Activated naive CD4-positive, alpha-beta T cell treated with anti-CD3 and anti-CD28 coated beads for 36 hours (primary cell): ENCODE measurements at regions of chr1 and their contacts with region 1.

Region 1: GRCh38 chr1:236281654-236282424 is at the start of gene ERO1B:
- DNase-seq: peak; percentile 95
- H3K4me3 Mint-ChIP-seq: peak within 1 kb of the TSS; percentile 91
- H3K27ac Mint-ChIP-seq: peak within 1 kb of the TSS; percentile 66
- H3K4me1 Mint-ChIP-seq: peaks cover 41% of the 10 kb centered on the region
- H3K27me3 Mint-ChIP-seq: no peaks in the 10 kb centered on the region
- total RNA-seq, gene ERO1B: 1.6 to 2.5 TPM

Region 2: GRCh38 chr1:235504496-235505222 is 777.2 kb before region 1 on chr1:
- CTCF ChIA-PET with region 1: no interaction called
- intact Hi-C with region 1: loop called (anchors 2 kb)
- DNase-seq: peak; percentile 99
- H3K4me3 Mint-ChIP-seq: peak overlapping the region; percentile 97
- H3K27ac Mint-ChIP-seq: peak overlapping the region; percentile 97
- H3K4me1 Mint-ChIP-seq: peaks cover 31% of the 10 kb centered on the region
- H3K27me3 Mint-ChIP-seq: no peaks in the 10 kb centered on the region

Region 3: DNA sequence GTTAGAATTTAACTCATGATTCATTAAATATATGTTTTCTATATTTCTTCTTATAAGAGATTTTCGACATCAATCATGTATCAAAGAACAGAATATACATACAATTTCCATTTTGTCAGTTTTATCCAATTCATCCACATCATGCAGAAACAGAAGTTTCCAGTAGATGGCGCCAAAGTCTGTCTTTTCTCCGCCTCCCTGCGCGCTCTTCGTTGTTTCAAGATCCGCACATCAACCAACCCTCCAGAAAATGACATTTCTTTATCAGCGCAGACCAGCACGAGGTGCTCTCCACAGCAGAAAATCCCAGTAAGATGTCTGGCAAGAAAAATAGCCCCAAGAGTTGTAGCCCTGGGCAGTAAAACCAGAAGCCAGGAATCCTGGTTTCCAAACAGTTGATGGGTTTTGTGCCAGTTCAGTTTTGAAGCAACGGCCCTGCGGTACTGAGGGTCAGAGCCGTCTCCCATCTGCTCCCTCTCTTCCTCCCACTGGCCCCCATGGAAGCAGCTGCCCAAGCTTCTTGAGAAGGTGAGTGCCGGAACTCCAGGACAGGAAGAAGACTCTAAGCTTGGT is 178.1 kb before region 1 on chr1:
- CTCF ChIA-PET with region 1: no interaction called
- intact Hi-C with region 1: loop called (anchors 5 kb)
- DNase-seq: peak; percentile 80
- H3K4me3 Mint-ChIP-seq: no peak overlapping the region
- H3K27ac Mint-ChIP-seq: no peak overlapping the region
- H3K4me1 Mint-ChIP-seq: peaks cover 2% of the 10 kb centered on the region
- H3K27me3 Mint-ChIP-seq: no peaks in the 10 kb centered on the region

Region 4: DNA sequence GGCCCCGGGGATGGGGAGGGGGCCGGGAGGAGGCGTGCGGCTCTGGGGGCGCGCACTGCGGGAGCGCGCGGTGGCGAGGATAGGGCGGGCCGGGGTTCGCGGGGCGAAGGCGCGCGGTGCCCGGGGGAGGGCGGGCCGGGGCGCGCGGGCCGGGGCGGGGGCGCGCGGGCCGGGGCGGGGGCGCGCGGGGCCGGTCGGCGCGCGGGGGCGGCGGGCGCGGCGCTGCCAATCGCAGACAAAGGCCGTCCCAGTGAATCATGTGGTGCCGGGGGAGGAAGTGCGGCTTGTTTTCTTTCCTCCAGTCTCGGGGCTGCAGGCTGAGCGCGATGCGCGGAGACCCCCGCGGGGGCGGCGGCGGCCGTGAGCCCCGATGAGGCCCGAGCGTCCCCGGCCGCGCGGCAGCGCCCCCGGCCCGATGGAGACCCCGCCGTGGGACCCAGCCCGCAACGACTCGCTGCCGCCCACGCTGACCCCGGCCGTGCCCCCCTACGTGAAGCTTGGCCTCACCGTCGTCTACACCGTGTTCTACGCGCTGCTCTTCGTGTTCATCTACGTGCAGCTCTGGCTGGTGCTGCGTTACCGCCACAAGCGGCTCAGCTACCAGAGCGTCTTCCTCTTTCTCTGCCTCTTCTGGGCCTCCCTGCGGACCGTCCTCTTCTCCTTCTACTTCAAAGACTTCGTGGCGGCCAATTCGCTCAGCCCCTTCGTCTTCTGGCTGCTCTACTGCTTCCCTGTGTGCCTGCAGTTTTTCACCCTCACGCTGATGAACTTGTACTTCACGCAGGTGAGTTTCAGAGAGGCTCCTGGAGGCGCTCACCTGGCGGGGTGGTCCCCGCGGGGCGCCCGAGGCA is 139.4 kb before region 1 on chr1 and contains the start of gene GPR137B:
- CTCF ChIA-PET with region 1: interaction called, 5 read pairs
- intact Hi-C with region 1: loop called (anchors 1 kb)
- DNase-seq: peak; percentile 74
- H3K4me3 Mint-ChIP-seq: peak within 1 kb of the TSS; percentile 87
- H3K27ac Mint-ChIP-seq: no peak within 1 kb of the TSS
- H3K4me1 Mint-ChIP-seq: peaks cover 9% of the 10 kb centered on the region
- H3K27me3 Mint-ChIP-seq: peaks cover 37% of the 10 kb centered on the region
- total RNA-seq, gene GPR137B: 1.6 to 2.4 TPM

Region 5: GRCh38 chr1:236303687-236304086 is 21.8 kb after region 1 on chr1:
- CTCF ChIA-PET with region 1: interaction called, 3 read pairs
- intact Hi-C with region 1: loop called (anchors 1 kb)
- DNase-seq: peak; percentile 42
- H3K4me3 Mint-ChIP-seq: no peak overlapping the region
- H3K27ac Mint-ChIP-seq: no peak overlapping the region
- H3K4me1 Mint-ChIP-seq: peaks cover 2% of the 10 kb centered on the region
- H3K27me3 Mint-ChIP-seq: no peaks in the 10 kb centered on the region

Region 6: GRCh38 chr1:236523701-236524141 is 241.9 kb after region 1 on chr1 and contains the start of gene LGALS8:
- CTCF ChIA-PET with region 1: no interaction called
- intact Hi-C with region 1: loop called (anchors 1 kb)
- DNase-seq: peak; percentile 91
- H3K4me3 Mint-ChIP-seq: peak within 1 kb of the TSS; percentile 96
- H3K27ac Mint-ChIP-seq: peak within 1 kb of the TSS; percentile 97
- H3K4me1 Mint-ChIP-seq: peaks cover 9% of the 10 kb centered on the region
- H3K27me3 Mint-ChIP-seq: no peaks in the 10 kb centered on the region
- total RNA-seq, gene LGALS8: 78.6 to 89.4 TPM

Region 7: GRCh38 chr1:236795035-236795756 is 513.4 kb after region 1 on chr1 and contains the start of gene MTR:
- CTCF ChIA-PET with region 1: no interaction called
- intact Hi-C with region 1: loop called (anchors 1 kb)
- DNase-seq: peak; percentile 98
- H3K4me3 Mint-ChIP-seq: peak within 1 kb of the TSS; percentile 80
- H3K27ac Mint-ChIP-seq: peak within 1 kb of the TSS; percentile 86
- H3K4me1 Mint-ChIP-seq: peaks cover 27% of the 10 kb centered on the region
- H3K27me3 Mint-ChIP-seq: no peaks in the 10 kb centered on the region
- total RNA-seq, gene MTR: 55.3 to 57.6 TPM